Activated B cell treated with CpG ODN at 0.5 μM for 24 hours (primary cell): ENCODE measurements at regions of chr3 and their contacts with region 1.

Region 1: DNA sequence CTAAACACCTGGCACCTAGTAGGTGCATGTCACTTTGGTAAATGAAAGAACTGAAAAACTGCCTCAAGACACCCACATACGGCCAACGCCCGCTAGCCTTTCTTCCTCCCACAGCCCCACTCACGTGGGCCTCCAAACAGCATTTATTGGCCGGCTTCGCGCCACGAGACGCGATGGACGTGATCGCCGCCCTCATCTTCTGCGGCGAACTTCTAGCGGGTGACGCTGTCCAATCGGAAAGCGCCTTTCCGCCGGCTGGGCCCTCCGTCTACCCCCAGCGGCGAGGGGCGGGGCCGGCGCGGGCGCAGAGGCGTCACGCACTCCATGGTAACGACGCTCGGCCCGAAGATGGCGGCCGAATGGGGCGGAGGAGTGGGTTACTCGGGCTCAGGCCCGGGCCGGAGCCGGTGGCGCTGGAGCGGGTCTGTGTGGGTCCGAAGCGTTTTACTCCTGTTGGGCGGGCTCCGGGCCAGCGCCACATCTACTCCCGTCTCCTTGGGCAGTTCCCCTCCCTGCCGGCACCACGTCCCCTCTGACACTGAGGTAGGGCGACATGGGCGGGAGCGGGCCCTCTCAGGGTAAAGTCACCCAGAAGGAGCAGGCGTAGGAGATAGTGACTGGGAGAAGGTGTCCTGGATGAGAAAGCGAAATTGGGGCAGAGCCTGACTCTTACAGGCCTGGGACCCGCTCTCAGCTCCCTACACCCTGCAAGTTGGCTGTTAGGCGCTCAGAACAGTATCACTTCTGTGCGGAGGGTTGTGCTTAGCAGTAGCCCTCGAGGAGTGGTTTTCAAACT is at the start of gene LMLN:
- DNase-seq: peak; percentile 89
- ATAC-seq: peak; percentile 97
- H3K4me3 Mint-ChIP-seq: peak within 1 kb of the TSS; percentile 89
- H3K27ac Mint-ChIP-seq: peak within 1 kb of the TSS; percentile 89
- H3K4me1 Mint-ChIP-seq: peaks cover 30% of the 10 kb centered on the region
- H3K27me3 Mint-ChIP-seq: peaks cover 1% of the 10 kb centered on the region
- CTCF ChIP-seq: no peak
- total RNA-seq, gene LMLN: 2.9 and 4.1 TPM in 2 replicates

Region 2: DNA sequence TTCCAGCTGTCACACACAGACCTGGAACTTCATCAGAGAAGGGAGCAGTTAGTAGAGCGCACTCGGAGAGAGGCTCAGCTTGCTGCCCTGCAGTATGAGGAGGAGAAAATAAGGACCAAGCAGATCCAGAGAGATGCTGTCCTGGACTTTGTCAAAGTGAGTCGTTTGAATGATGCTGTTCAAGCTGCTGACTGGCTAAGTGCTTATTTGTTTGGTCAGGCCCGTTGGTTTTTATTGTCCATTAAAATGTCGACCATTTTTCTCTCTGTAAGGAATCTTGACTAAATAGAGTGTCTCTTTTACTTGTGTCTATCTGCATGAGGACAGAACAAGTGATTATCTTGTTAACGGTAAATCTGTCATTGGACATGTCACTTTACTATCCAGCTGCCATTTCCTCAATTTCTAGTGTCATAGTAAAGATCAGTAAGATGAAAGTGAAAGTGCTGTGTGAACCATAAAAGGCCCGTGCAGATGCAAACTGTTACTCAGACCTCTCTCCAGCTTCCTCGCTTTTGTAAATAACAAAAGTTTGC is 112.2 kb before region 1 on chr3:
- CTCF ChIA-PET with region 1: no interaction called
- POLR2A ChIA-PET with region 1: no interaction called
- intact Hi-C with region 1: no loop called
- DNase-seq: no peak
- ATAC-seq: peak; percentile 96
- H3K4me3 Mint-ChIP-seq: peak overlapping the region; percentile 76
- H3K27ac Mint-ChIP-seq: peak overlapping the region; percentile 92
- H3K4me1 Mint-ChIP-seq: peaks cover 19% of the 10 kb centered on the region
- H3K27me3 Mint-ChIP-seq: no peaks in the 10 kb centered on the region
- CTCF ChIP-seq: no peak

Region 3: DNA sequence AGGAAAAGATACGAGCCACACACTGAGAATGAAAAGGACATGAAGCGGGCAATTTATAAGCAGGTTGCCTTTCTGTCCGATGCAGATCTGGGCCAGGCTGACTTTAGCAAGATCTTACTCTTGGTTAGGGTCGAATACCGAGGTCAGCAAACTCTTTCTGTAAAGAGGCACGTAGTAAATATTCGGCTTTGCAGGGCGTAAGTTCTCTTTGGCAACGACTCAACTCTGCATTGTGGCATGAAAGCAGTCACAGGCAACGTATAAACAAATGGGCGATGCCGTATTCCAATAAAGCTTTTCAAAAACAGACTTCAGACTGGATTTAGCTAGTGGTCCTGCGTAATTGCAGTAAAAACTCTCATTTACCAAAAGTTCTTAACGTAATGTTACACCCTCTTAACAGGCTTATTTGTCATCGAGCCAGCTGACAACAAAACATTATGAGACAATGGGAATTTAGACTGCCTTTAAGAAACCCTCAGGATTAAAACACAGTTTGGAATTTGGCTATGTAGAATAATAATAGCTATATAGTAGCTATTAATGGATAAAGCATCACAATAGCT is 23.2 kb before region 1 on chr3:
- CTCF ChIA-PET with region 1: no interaction called
- POLR2A ChIA-PET with region 1: no interaction called
- intact Hi-C with region 1: no loop called
- DNase-seq: no peak
- ATAC-seq: no peak
- H3K4me3 Mint-ChIP-seq: no peak overlapping the region
- H3K27ac Mint-ChIP-seq: no peak overlapping the region
- H3K4me1 Mint-ChIP-seq: no peaks in the 10 kb centered on the region
- H3K27me3 Mint-ChIP-seq: no peaks in the 10 kb centered on the region
- CTCF ChIP-seq: no peak

Region 4: DNA sequence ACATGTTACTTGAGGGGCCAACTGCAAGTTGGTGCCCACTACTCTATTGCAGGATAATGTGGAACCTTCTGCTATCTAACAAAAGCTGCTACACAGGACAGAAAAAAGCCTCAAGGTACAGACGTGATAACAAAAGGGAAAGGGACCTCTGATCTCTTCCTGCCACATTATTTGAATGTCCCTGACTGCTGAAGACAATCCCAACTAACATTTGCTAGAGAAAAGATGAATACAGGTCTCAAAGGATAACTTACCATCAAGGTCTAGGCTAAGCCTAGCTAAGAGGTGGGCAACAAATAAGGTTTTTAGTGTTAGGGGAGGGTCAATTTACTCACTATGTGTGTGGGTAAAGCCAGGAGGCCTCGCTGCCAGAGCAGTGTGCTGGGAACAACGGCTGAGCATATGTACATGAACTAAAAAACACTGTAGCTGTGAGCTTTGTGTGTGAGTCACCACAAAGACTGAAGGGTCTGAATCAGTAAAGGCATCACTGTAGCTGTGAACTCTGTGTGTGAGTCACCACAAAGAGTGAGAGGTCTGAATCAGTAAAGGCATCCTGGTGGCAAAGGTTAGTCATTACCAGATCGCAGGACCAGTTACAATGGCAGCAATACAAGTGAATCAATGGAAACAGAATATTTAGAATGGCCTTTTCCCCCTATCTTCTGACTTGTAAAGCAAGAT is 111.6 kb after region 1 on chr3:
- CTCF ChIA-PET with region 1: no interaction called
- POLR2A ChIA-PET with region 1: interaction called, 3 read pairs
- intact Hi-C with region 1: loop called (anchors 5 kb)
- DNase-seq: no peak
- ATAC-seq: peak; percentile 100
- H3K4me3 Mint-ChIP-seq: no peak overlapping the region
- H3K27ac Mint-ChIP-seq: peak overlapping the region; percentile 69
- H3K4me1 Mint-ChIP-seq: peaks cover 34% of the 10 kb centered on the region
- H3K27me3 Mint-ChIP-seq: no peaks in the 10 kb centered on the region
- CTCF ChIP-seq: no peak

Region 5: DNA sequence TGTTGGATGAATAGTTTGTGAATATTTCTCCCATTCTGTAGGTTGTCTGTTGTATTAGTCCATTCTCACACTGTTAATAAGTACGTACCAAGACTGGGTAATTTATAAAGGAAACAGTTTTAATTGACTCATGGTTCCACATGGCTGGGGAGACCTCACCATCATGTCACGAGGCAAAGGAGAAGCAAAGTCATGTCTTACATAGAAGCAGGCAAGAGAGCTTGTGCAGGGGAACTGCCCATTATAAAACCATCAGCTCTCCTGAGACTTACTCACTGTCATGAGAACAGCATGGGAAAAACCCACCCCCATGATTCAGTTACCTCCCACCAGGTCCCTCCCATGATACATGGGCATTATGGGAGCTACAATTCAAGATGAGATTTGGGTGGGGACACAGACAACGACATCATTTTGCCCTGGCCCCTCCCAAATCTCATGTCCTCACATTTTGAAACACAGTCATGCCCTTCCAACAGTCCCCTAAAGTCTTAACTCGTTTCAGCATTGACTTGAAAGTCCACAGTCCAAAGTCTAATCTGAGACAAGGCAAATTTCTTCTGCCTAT is 133.1 kb after region 1 on chr3:
- CTCF ChIA-PET with region 1: no interaction called
- POLR2A ChIA-PET with region 1: no interaction called
- intact Hi-C with region 1: no loop called
- DNase-seq: no peak
- ATAC-seq: peak; percentile 50
- H3K4me3 Mint-ChIP-seq: no peak overlapping the region
- H3K27ac Mint-ChIP-seq: no peak overlapping the region
- H3K4me1 Mint-ChIP-seq: peaks cover 4% of the 10 kb centered on the region
- H3K27me3 Mint-ChIP-seq: peaks cover 28% of the 10 kb centered on the region
- CTCF ChIP-seq: no peak